ENCODE measurements at regions of chr5 and their contacts with region 1.

Region 1: GRCh38 chr5:132426525-132427138 is 57.1 kb downstream of the SLC22A5 start:
- DNase-seq: peak; percentile 80
- H3K4me3 ChIP-seq: no peak overlapping the region
- H3K27ac ChIP-seq: peak overlapping the region; percentile 62
- H3K4me1 ChIP-seq: peaks cover 31% of the 10 kb centered on the region
- H3K27me3 ChIP-seq: no peaks in the 10 kb centered on the region
- CTCF ChIP-seq: peak; percentile 53 to 54
- POLR2A ChIP-seq: no peak

Region 2: GRCh38 chr5:132380047-132380446 is 46.6 kb before region 1 on chr5:
- CTCF ChIA-PET with region 1: no interaction called
- POLR2A ChIA-PET with region 1: no interaction called
- dilution Hi-C with region 1: no loop called
- intact Hi-C with region 1: no loop called
- DNase-seq: no peak
- H3K4me3 ChIP-seq: no peak overlapping the region
- H3K27ac ChIP-seq: no peak overlapping the region
- H3K4me1 ChIP-seq: no peaks in the 10 kb centered on the region
- H3K27me3 ChIP-seq: no peaks in the 10 kb centered on the region
- CTCF ChIP-seq: no peak
- POLR2A ChIP-seq: no peak

Region 3: GRCh38 chr5:132437604-132438266 is 11.1 kb after region 1 on chr5:
- CTCF ChIA-PET with region 1: interaction called, 11 read pairs
- POLR2A ChIA-PET with region 1: no interaction called
- dilution Hi-C with region 1: no loop called
- intact Hi-C with region 1: no loop called
- DNase-seq: peak; percentile 16
- H3K4me3 ChIP-seq: no peak overlapping the region
- H3K27ac ChIP-seq: no peak overlapping the region
- H3K4me1 ChIP-seq: peaks cover 4% of the 10 kb centered on the region
- H3K27me3 ChIP-seq: no peaks in the 10 kb centered on the region
- CTCF ChIP-seq: no peak
- POLR2A ChIP-seq: no peak

Measured in endothelial cell of umbilical vein (primary cell).